ENCODE measurements at regions of chr18 and their contacts with region 1.

Region 1: DNA sequence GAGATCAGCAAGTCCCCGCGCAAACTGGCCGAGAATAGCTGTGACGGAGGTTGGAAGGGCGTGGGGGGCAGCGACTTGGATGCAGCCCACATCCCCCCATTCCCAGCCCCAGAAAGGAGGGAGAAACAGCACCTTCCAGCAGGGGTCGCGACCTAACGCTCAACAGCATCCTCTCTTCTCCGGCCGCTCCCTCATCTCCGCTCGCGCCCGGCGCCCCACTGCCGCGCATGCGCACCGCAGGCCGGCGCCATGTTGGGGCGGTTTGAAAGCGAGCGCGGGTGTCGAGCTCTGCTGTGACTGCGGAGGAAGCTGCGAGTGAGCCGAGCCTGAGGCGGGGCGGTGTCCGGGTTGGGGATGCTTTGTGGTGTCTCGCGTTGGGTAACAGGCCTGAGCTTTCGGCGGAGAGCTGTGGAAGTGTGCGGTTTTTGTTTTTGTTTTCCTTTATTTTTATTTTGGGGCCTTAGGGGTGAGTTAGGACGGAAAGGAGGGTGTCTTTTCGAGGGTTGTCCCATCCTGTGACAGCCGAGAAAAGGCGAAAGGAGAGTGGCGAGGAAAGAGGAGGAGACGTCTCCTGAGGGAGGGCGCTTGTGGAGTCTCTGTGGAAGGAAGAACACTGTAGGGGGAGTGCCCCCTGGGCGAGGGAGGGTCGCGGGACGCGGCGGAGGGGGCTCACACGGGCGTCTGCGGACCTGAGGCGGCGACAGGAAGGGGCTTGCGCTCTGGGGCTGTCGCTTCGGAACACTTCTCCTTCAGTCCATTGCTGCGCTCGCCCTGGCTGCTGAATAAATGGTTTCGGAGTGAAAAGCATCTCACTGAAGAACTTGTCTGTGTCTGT is at the starts of genes C18orf54 and STARD6:
- DNase-seq: peak; percentile 89
- ATAC-seq: peak; percentile 97
- H3K4me3 Mint-ChIP-seq: peak within 1 kb of the TSS; percentile 98
- H3K27ac Mint-ChIP-seq: peak within 1 kb of the TSS; percentile 95
- H3K4me1 Mint-ChIP-seq: peaks cover 9% of the 10 kb centered on the region
- H3K27me3 Mint-ChIP-seq: peaks cover 3% of the 10 kb centered on the region
- CTCF ChIP-seq: peak; percentile 55
- total RNA-seq, gene C18orf54: 7.3 to 7.6 TPM
- total RNA-seq, gene STARD6: not detected

Region 2: GRCh38 chr18:54173980-54174630 is 183.8 kb before region 1 on chr18:
- CTCF ChIA-PET with region 1: interaction called, 7 read pairs
- POLR2A ChIA-PET with region 1: no interaction called
- intact Hi-C with region 1: loop called (anchors 10 kb)
- DNase-seq: peak; percentile 22
- ATAC-seq: peak; percentile 77
- H3K4me3 Mint-ChIP-seq: no peak overlapping the region
- H3K27ac Mint-ChIP-seq: peak overlapping the region; percentile 90
- H3K4me1 Mint-ChIP-seq: peaks cover 39% of the 10 kb centered on the region
- H3K27me3 Mint-ChIP-seq: no peaks in the 10 kb centered on the region
- CTCF ChIP-seq: no peak

Region 3: GRCh38 chr18:54284981-54285785 is 72.7 kb before region 1 on chr18:
- CTCF ChIA-PET with region 1: interaction called, 4 read pairs
- POLR2A ChIA-PET with region 1: interaction called, 3 read pairs
- intact Hi-C with region 1: loop called (anchors 5 kb)
- DNase-seq: peak; percentile 92
- ATAC-seq: peak; percentile 97
- H3K4me3 Mint-ChIP-seq: peak overlapping the region; percentile 18
- H3K27ac Mint-ChIP-seq: peak overlapping the region; percentile 86
- H3K4me1 Mint-ChIP-seq: peaks cover 28% of the 10 kb centered on the region
- H3K27me3 Mint-ChIP-seq: no peaks in the 10 kb centered on the region
- CTCF ChIP-seq: no peak

Measured in activated CD8-positive, alpha-beta T cell treated with anti-CD3 and anti-CD28 coated beads for 36 hours (primary cell).